Right ventricle myocardium superior (tissue), 1 donor: ENCODE measurements at regions of chr17 and their contacts with region 1.

Region 1: DNA sequence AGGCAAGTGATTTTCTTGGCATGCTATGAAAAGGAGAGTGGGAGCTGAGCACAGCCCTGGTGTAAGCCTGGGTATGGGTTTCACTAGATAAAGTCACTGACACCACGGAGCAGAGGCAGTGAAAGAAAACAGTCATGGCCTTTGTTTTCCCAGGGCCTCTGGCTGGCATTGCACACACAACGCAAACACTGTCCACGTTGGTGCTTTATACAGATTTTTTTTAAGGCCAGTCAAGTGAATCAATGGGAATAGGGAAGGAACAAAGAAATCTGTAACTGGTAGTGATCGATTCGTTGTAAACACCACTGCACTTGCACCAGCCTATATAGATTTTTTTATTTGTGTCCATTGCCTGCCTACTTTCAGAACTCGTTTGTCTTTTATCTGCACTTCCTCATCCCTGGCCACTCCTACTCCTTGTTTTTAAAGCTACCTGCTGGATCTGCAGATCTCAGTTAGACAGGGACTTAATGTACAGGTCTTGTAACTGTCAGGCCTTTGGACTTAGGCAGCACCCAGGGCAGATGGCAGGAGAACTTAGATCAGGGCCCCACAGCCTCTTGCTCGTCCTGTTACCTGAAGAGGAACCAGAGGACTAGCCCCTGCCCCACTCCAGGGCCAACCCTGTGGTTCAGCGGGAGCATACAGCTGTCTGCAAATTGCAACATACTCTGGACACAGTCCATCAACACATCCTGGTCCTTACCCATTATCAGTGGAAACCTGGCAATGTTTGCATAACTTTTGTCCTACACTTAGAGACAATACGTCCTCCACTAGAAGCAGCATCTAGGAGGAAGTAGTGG is 10.6 kb upstream of the TMIGD1 start:
- DNase-seq: peak; percentile 62
- ATAC-seq: peak; percentile 93

Region 2: GRCh38 chr17:30378824-30379302 is 34.4 kb after region 1 on chr17 and contains the start of gene CPD:
- intact Hi-C with region 1: loop called (anchors 5 kb)
- DNase-seq: peak; percentile 98
- ATAC-seq: peak; percentile 99
- total RNA-seq, gene CPD: 16.1 TPM

Region 3: DNA sequence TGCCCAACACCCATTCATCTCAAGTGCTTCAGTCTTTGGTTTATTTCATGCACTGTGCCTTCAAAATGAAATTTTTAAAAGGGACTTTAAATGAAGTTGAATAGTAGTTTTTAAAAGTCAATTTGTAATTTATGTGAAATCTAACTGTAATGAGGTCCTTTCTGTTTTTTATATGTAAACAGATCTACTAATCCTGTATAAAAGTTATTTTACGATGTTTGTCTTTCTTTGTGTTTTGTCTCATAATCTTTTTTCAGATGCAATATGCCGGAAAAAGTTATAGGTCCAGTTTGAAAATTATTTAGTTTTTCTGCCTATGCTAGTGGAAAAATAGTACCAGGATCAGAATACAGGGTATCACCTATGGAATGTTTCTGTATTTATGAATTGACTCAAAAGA is 124.0 kb after region 1 on chr17:
- intact Hi-C with region 1: loop called (anchors 10 kb)
- DNase-seq: no peak
- ATAC-seq: no peak

Region 4: DNA sequence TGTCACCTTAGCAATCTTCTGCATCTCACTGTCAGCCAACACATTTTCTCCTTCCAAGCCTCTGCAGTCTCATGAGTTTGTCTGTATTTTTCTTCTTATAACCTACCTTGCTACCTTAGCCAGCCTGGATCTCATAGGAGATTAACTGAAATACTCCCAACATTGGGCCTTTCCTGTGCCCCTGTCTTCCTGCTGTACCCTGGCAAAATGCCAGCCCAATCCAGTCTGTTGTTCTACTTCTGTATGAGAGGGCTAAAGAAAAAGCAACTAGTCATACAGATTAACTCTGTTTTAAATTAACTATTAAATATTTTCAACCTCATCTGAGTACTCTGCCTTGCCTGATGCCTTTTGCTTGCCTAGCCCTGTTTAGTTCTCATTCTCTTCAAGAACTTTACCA is 151.1 kb after region 1 on chr17:
- intact Hi-C with region 1: no loop called
- DNase-seq: no peak
- ATAC-seq: no peak

Region 5: DNA sequence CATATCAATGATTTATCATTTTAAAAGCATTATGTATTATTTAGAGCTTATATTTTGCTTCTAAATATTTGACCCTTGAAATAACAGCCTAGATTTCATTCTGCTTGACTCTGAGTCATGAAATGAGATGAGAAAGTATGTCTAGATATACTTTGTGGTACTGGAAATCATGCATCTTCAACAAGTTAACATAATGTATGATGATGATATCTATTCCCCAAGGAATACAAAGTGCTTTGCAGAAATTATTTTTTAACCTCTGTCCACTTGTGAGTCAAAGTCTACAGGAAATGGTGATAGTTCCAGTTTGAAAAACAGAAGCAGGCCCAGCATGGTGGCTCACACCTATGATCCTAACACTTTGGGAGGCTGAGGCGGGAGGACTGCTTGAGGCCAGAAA is 168.9 kb after region 1 on chr17:
- intact Hi-C with region 1: no loop called
- DNase-seq: no peak
- ATAC-seq: no peak